Left ventricle myocardium superior (tissue), 1 donor: ENCODE measurements at regions of chr6 and their contacts with region 1.

Region 1: DNA sequence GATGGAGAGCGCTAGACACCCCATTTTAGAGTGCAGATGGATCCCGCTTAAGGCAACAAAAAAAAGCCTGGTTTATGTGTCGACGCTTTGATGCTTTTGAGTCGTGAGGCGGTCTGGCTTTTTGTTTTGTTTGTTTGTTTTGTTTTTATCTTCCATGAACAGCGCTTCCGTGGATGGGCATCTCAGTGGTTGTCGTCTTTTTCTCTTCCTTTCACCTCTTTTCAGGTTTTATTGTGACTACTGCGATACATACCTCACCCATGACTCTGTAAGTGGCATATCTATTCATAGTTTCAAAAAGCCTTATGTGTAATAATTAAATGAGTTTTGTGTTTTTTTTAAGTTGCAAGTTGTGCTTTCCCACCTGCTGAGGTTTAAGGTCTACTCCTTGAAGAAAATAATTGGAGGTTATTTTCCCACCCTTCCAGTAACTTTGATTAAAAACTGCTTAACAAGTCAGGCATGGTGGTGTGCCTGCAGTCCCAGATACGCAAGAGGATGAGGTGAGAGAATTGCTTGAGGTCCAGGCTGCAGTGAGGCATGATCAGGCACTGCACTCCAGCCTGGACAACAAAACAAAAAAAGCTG is 476 bp downstream of the SNRPC start:
- DNase-seq: no peak
- ATAC-seq: no peak

Region 2: GRCh38 chr6:34610819-34611477 is 146.8 kb before region 1 on chr6:
- intact Hi-C with region 1: no loop called
- DNase-seq: no peak
- ATAC-seq: peak; percentile 31

Region 3: GRCh38 chr6:34638834-34639736 is 118.7 kb before region 1 on chr6:
- intact Hi-C with region 1: loop called (anchors 10 kb)
- DNase-seq: no peak
- ATAC-seq: peak; percentile 91

Region 4: GRCh38 chr6:34887753-34888513 is 130.2 kb after region 1 on chr6 and contains the start of gene TAF11:
- intact Hi-C with region 1: no loop called
- DNase-seq: peak; percentile 95
- ATAC-seq: peak; percentile 91
- total RNA-seq, gene TAF11: 18.9 TPM